H1 (cell line): ENCODE measurements at regions of chr20 and their contacts with region 1.

Region 1: DNA sequence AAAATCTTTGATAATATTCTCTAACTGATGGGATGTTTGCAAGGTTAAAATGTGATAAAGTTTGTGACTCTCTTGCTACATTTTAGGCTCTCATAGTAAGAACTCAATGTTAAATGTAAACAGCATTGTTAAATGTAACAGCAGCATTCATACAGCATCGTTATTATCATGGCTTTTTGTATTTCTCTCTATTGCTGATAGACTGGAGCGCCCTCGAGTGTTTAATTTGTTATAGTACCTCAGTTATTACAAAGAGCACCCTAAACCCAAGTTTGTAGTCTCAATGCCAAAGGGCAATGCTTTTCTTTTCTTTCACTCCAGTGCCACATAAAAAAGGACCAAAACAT is 14.9 kb upstream of the TTPAL start:
- DNase-seq: no peak
- H3K4me3 ChIP-seq: no peak overlapping the region
- H3K27ac ChIP-seq: no peak overlapping the region
- H3K4me1 ChIP-seq: no peaks in the 10 kb centered on the region
- H3K27me3 ChIP-seq: no peaks in the 10 kb centered on the region
- CTCF ChIP-seq: peak in 2 of 3 experiments; percentile 35 to 52; a peak in 2 of 4 replicates
- EP300 ChIP-seq: no peak
- POLR2A ChIP-seq: no peak
- RAD21 ChIP-seq: peak; percentile 62 to 66

Region 2: GRCh38 chr20:44394702-44395460 is 65.9 kb before region 1 on chr20:
- CTCF ChIA-PET with region 1: interaction called, 21 read pairs
- POLR2A ChIA-PET with region 1: no interaction called
- DNase-seq: no peak
- H3K4me3 ChIP-seq: no peak overlapping the region
- H3K27ac ChIP-seq: no peak overlapping the region
- H3K4me1 ChIP-seq: no peaks in the 10 kb centered on the region
- H3K27me3 ChIP-seq: no peaks in the 10 kb centered on the region
- CTCF ChIP-seq: no peak
- EP300 ChIP-seq: no peak
- POLR2A ChIP-seq: no peak
- RAD21 ChIP-seq: no peak

Region 3: GRCh38 chr20:44471481-44471882 is 10.7 kb after region 1 on chr20:
- CTCF ChIA-PET with region 1: interaction called, 11 read pairs
- POLR2A ChIA-PET with region 1: no interaction called
- DNase-seq: no peak
- H3K4me3 ChIP-seq: no peak overlapping the region
- H3K27ac ChIP-seq: no peak overlapping the region
- H3K4me1 ChIP-seq: peaks cover 2 to 7% (median 2%) of the 10 kb centered on the region in 4 experiments; a peak in 5 of 7 replicates
- H3K27me3 ChIP-seq: no peaks in the 10 kb centered on the region; a peak in 1 of 7 replicates
- CTCF ChIP-seq: peak in 2 of 3 experiments; percentile 32 to 46; a peak in 2 of 4 replicates
- EP300 ChIP-seq: no peak
- POLR2A ChIP-seq: no peak
- RAD21 ChIP-seq: peak; percentile 67 to 68

Region 4: DNA sequence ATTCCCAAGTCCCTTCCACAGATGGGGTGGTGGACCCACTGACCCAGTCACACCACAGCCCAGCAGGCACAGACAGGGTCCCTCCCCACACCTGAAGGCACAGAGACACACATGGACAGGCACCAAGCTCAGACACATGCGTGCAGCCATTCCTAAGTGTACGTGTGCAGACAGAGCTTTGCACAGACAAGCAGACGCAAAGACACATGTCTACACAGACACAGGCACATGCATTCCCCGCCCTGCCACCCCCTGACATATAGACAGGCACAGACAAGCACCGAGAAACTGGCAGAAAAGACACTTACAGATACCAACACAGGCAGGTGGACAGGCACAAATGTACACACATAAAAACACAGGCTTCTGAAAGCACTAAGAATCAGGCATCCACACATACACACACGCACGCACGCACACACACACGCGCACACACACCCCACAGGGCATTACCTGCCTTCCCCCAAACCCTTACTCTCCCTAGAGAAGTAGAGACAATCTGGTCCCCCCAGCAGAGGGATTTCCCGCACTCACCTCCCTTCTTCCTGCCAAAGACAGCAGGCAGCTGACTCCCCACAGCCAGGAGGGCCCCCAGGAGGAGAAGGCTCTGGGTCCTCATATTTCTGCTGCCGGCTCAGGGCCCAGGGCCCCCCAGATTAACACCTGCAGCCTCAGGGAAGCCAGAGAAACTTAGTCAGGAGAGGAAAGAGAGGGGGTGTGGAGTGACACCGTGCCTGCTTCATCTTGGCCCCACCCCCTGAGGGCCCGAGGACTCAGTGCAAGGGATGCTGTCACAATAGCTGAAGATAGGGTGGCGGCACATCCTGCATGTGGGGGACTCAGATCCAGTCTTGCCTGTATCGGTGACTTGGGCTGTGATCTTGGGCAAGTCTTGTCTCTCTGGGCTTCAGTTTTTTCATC is 654.0 kb after region 1 on chr20 and contains the start of gene WFDC5:
- CTCF ChIA-PET with region 1: no interaction called
- POLR2A ChIA-PET with region 1: no interaction called
- DNase-seq: peak in 1 of 2 experiments; percentile 52
- H3K4me3 ChIP-seq: no peak within 1 kb of the TSS; a peak in 1 of 8 replicates
- H3K27ac ChIP-seq: no peak within 1 kb of the TSS
- H3K4me1 ChIP-seq: peaks cover 0 to 7% (median 2%) of the 10 kb centered on the region in 4 experiments; a peak in 5 of 7 replicates
- H3K27me3 ChIP-seq: no peaks in the 10 kb centered on the region
- CTCF ChIP-seq: no peak
- EP300 ChIP-seq: no peak
- POLR2A ChIP-seq: no peak
- RAD21 ChIP-seq: no peak
- total RNA-seq, gene WFDC5: not detected in 2 replicates